Head of caudate nucleus (tissue), 42 donors: ENCODE measurements at regions of chr10 and their contacts with region 1.

Region 1: GRCh38 chr10:96374985-96375830 is 16.4 kb upstream of the OPALIN start:
- DNase-seq: peak; percentile 81 to 97 (median 93)

Region 2: DNA sequence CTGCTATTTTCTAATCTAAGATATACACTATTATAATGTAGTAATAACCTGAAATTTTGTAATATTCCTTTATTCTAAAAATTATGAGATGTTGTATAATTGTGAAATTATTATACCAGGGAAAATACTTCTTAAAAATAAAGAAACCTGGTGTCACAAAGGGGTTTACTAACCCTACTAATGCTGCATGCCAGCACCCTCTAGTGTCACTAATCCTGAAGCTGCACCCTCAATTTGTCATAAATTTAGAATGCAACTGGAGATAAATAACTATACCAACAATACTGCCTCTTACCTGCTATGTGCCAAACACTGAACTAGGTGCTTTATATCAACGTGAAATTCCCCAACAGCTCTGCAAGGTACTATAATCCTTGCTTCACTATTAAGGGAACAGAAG is 180.8 kb after region 1 on chr10:
- intact Hi-C with region 1: loop called (anchors 10 kb)
- DNase-seq: peak in 24 of 42 donors; percentile 6 to 65 (median 28)